Activated naive CD4-positive, alpha-beta T cell treated with anti-CD3 and anti-CD28 coated beads for 36 hours (primary cell): ENCODE measurements at regions of chr2 and their contacts with region 1.

Region 1: DNA sequence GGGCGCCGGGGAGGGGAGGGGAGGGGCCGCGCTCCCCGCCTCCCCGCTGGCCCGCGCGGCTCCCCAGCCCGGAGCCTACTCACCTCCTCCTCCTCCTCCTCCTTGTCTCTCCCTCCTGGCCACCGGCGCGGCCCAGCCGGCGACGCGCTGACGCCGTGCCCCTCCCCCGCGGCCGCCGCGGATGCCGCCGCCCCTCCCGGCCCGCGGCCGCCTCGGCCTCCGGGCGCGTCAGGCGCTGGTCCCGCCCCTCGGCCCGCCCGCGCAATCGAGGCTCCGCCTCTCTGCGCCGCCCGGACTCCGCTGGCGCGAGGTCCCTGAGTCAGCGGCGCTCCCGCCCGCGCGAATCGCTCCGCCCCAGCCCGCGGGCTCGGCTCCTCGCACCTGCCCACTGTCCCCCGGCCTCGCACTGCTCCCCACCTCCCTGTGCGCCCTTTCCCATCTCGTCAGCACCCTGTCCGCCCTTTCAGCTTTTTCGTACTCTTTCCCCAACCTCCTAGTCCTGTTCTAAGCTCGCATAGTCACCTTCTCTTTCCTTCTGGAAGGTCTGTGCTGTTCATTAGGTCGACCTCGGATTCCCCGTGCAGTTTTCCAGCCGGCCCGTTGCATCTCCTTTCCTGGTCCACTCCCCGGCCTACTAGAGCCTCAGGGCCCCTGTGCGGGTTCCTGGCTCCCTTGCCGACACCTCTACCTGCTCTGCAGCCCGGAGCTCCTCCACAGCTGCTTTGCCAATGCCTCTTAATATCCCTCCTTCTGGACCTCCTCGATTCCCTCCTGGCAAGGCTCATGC is 187.4 kb downstream of the ZEB2 start:
- DNase-seq: peak; percentile 83
- H3K4me3 Mint-ChIP-seq: peak overlapping the region; percentile 79
- H3K27ac Mint-ChIP-seq: peak overlapping the region; percentile 78
- H3K4me1 Mint-ChIP-seq: peaks cover 19% of the 10 kb centered on the region
- H3K27me3 Mint-ChIP-seq: no peaks in the 10 kb centered on the region

Region 2: GRCh38 chr2:143083636-143084035 is 1248.9 kb before region 1 on chr2:
- CTCF ChIA-PET with region 1: no interaction called
- intact Hi-C with region 1: loop called (anchors 10 kb)
- DNase-seq: peak; percentile 15
- H3K4me3 Mint-ChIP-seq: no peak overlapping the region
- H3K27ac Mint-ChIP-seq: no peak overlapping the region
- H3K4me1 Mint-ChIP-seq: peaks cover 27% of the 10 kb centered on the region
- H3K27me3 Mint-ChIP-seq: no peaks in the 10 kb centered on the region

Region 3: DNA sequence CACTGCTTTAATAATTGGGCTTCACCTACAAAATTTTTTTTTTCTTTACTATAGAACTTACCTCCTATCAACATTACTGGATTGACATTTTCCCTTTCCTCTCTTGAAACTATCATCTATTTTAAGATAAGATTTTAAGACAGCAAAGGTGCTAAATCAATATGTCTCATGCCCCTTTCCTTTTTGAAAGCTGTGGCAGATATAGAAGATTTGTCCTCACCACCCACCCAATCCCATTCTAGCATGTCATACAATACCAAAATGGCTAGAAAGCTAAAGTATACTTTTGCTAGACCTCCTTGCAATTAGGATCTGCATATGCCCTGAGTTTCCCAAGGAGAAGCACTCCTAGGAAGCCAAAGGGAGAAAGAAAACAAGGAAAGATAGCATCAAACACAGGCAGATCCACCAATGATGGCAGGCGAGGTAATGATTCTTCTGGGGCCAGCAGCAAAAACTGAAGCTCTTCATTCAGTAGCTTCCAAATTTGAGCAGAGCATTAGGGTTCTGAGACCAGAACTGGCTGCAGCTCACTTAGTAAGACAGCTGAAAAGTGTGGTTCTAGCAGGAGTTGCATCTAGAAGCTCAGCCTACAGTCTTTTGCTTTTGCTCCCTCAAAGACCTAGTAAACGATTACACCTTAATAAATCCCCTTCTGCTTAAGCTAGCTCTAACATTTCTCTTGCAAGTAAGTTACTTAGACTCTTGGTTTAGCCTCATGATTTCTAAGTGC is 54.8 kb before region 1 on chr2:
- CTCF ChIA-PET with region 1: no interaction called
- intact Hi-C with region 1: no loop called
- DNase-seq: no peak
- H3K4me3 Mint-ChIP-seq: no peak overlapping the region
- H3K27ac Mint-ChIP-seq: no peak overlapping the region
- H3K4me1 Mint-ChIP-seq: peaks cover 7% of the 10 kb centered on the region
- H3K27me3 Mint-ChIP-seq: no peaks in the 10 kb centered on the region

Region 4: GRCh38 chr2:144615866-144616565 is 283.5 kb after region 1 on chr2:
- CTCF ChIA-PET with region 1: no interaction called
- intact Hi-C with region 1: no loop called
- DNase-seq: no peak
- H3K4me3 Mint-ChIP-seq: no peak overlapping the region
- H3K27ac Mint-ChIP-seq: no peak overlapping the region
- H3K4me1 Mint-ChIP-seq: no peaks in the 10 kb centered on the region
- H3K27me3 Mint-ChIP-seq: peaks cover 18% of the 10 kb centered on the region